ENCODE measurements at regions of chr2 and their contacts with region 1.

Region 1: DNA sequence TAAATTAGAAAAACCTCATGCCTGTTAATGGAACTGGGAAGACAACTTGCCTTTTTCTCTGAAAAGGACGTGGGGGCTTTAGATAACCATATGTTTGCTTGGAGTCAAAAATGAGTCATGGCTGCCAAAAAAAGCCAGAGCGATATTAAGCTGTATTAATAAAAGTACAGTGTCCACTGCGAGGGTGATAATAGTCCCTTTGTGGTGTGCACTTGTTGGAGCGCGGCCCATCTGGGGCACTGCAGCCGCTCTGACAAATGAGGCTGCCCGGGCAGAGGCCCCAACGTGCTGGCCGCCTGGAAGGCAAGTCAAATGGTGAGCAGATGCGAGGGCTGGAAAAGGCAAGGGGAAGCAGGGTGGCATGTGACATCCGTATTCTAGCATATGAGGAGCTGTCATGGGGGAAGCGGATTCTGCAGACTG is 103.3 kb upstream of the NCK2 start:
- DNase-seq: peak; percentile 74 to 91 (median 86)
- H3K4me3 ChIP-seq: peak overlapping the region in 15 of 59 donors; percentile 2 to 36 (median 16)
- H3K27ac ChIP-seq: peak overlapping the region in 14 of 59 donors; percentile 4 to 60 (median 26)
- H3K27me3 ChIP-seq: no peaks in the 10 kb centered on the region
- CTCF ChIP-seq: peak in 16 of 56 donors; percentile 9 to 50 (median 22)

Region 2: GRCh38 chr2:105604938-105605337 is 36.5 kb before region 1 on chr2:
- intact Hi-C with region 1: loop called in 1 of 2 experiments (anchors 2 kb)
- DNase-seq: peak in 6 of 10 donors; percentile 25 to 80 (median 58)
- H3K4me3 ChIP-seq: peak overlapping the region in 3 of 59 donors; percentile 1 to 25 (median 24)
- H3K27ac ChIP-seq: peak overlapping the region in 52 of 59 donors; percentile 28 to 91 (median 75)
- H3K27me3 ChIP-seq: no peaks in the 10 kb centered on the region
- CTCF ChIP-seq: no peak

Region 3: GRCh38 chr2:105674859-105675541 is 33.6 kb after region 1 on chr2:
- intact Hi-C with region 1: loop called in 1 of 2 experiments (anchors 5 kb)
- DNase-seq: no peak
- H3K4me3 ChIP-seq: no peak overlapping the region
- H3K27ac ChIP-seq: no peak overlapping the region
- H3K27me3 ChIP-seq: no peaks in the 10 kb centered on the region
- CTCF ChIP-seq: no peak

Region 4: GRCh38 chr2:105744091-105744908 is 102.9 kb after region 1 on chr2:
- intact Hi-C with region 1: loop called in 1 of 2 experiments (anchors 5 kb)
- DNase-seq: peak in 5 of 10 donors; percentile 26 to 61 (median 49)
- H3K4me3 ChIP-seq: peak overlapping the region; percentile 50 to 96 (median 69)
- H3K27ac ChIP-seq: peak overlapping the region in 58 of 59 donors; percentile 3 to 90 (median 80)
- H3K27me3 ChIP-seq: no peaks in the 10 kb centered on the region
- CTCF ChIP-seq: peak in 2 of 56 donors; percentile 14 to 21

Measured in dorsolateral prefrontal cortex (tissue), 120 donors.